ENCODE measurements at regions of chr1 and their contacts with region 1.

Region 1: DNA sequence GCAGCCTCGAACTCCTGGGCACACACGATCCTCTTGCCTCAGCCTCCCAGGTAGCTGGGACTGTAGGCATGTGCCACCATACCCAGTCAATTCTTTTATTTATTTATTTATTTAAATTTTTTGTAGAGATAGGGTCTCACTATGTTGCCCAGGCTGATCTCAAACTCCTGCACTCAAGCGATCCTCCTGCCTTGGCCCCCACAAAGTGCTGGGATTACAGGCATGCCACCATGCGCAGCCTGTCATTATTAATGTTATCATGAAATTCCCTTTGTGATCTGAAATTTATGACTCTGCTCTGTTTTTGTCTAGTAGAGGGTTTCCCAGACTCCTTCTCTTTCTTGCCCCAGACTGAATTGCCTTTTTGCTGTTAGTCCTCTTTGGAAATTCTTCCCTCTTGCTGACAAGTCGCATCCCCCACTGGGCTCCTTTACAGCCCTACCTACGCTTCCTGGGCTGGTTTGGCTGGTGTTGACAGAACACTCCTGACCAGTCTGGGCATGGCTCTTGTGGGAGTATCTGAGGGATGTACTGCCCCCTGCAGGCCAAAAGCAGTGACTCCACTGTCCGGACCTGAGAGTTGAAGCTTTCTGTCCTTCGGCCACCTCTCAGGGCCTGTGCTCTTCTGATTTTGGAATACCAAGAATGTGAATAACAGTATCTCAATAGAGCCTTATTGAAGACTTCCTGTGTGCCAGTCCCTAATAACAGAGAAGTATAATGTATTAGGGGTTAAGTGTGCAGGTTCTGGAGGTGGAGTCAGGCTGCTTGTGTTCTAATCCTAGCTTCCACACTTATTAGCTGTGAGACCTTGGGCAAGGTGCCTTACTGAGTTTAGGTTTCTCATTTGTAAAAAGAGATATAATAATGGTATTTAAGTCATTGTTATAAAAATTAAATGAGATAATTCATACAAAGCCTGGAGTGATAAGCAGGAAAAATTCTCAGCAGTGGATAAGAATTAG is 28.2 kb downstream of the TCEANC2 start:
- DNase-seq: peak; percentile 40 to 84 (median 69)
- H3K4me3 ChIP-seq: no peak overlapping the region
- H3K27ac ChIP-seq: no peak overlapping the region
- H3K4me1 ChIP-seq: no peaks in the 10 kb centered on the region
- H3K27me3 ChIP-seq: no peaks in the 10 kb centered on the region
- CTCF ChIP-seq: peak; percentile 46 to 68 (median 60)
- POLR2A ChIP-seq: no peak

Region 2: GRCh38 chr1:53725238-53725689 is 356.3 kb before region 1 on chr1:
- intact Hi-C with region 1: no loop called
- DNase-seq: peak in 1 of 7 donors; percentile 54
- H3K4me3 ChIP-seq: no peak overlapping the region
- H3K27ac ChIP-seq: no peak overlapping the region
- H3K4me1 ChIP-seq: no peaks in the 10 kb centered on the region
- H3K27me3 ChIP-seq: no peaks in the 10 kb centered on the region
- CTCF ChIP-seq: no peak
- POLR2A ChIP-seq: no peak

Region 3: GRCh38 chr1:53860967-53861411 is 220.6 kb before region 1 on chr1:
- intact Hi-C with region 1: loop called in 1 of 2 experiments (anchors 10 kb)
- DNase-seq: peak; percentile 31 to 63 (median 42)
- H3K4me3 ChIP-seq: no peak overlapping the region
- H3K27ac ChIP-seq: no peak overlapping the region
- H3K4me1 ChIP-seq: no peaks in the 10 kb centered on the region
- H3K27me3 ChIP-seq: no peaks in the 10 kb centered on the region
- CTCF ChIP-seq: peak; percentile 45 to 77 (median 66)
- POLR2A ChIP-seq: no peak

Region 4: DNA sequence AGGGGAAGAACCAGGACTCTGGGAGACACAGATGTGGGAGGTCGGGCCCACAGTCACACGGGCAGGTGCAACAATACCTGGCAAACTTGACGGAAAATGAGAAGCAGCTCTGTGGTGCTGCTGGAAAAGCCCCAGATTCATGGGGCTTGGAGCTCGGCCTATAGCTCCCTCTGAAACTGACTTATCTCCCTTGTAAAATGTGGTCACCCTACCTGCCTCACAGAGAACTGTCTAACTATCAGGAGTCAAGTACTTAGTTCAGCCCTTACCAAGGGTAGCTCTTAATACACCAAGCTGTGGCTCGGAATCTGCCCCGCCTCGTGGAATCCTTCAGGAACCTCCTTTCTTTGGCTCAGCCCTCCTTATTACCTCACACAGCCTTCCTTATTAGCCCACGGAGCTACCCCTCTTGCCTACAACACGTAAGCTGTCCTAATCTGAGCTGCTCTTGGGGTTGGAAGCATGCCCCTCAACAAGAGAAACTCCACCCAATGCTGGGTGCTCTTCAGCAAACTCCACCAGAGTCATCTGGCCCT is 187.2 kb after region 1 on chr1:
- intact Hi-C with region 1: no loop called
- DNase-seq: no peak
- H3K4me3 ChIP-seq: no peak overlapping the region
- H3K27ac ChIP-seq: peak overlapping the region in 2 of 5 donors; percentile 98 to 99
- H3K4me1 ChIP-seq: peaks cover 21 to 29% of the 10 kb centered on the region in 2 donors
- H3K27me3 ChIP-seq: no peaks in the 10 kb centered on the region
- CTCF ChIP-seq: no peak
- POLR2A ChIP-seq: no peak

Measured in adrenal gland (tissue), 19 donors.